HCT116 (cell line): ENCODE measurements at regions of chr10 and their contacts with region 1.

Region 1: DNA sequence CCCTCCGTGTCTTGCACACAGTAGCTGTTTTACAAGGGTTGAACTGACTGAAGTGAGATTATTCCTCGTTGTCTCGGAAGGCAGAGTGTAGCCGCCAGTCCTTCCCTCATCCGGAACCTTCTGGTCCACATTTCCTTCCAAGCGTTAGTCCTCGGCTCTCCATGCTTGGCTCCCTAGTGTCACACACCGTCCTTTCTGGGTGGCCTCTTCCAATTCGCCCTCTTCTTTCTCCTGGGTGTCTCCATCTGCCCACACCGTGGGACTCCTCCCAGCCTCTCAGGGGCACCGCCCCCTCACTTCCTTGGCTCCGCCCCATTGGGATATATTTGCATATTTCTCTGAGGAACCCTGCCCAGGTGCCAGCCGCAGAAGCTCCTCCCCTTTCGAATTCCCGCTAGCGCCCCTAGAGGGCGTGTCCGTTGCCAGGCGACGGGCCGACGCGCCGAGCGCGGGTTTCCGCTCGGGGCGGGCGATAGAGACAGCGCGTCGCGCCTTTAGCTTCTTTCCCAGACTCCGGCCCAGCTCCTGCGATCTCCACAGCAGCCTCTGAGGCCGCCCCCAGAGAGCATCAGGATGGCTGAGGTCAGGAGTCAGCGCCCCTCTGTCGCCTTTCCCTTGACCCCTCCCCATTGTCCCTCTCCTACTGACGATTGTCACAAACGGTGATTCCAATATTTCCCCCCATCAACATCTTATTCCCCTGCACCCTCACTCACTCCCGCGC is at the start of gene CFAP58:
- DNase-seq: peak; percentile 89
- ATAC-seq: peak; percentile 97
- H3K4me3 ChIP-seq: peak within 1 kb of the TSS; percentile 20 to 38
- H3K27ac ChIP-seq: no peak within 1 kb of the TSS
- H3K4me1 ChIP-seq: peaks cover 7 to 33% of the 10 kb centered on the region in 2 experiments; a peak in 3 of 4 replicates
- H3K27me3 ChIP-seq: no peaks in the 10 kb centered on the region; the same call in 1 of the 2 replicates
- CTCF ChIP-seq: peak; percentile 41 to 83 (median 75); a peak in 4 of 6 replicates
- POLR2A ChIP-seq: no peak
- RAD21 ChIP-seq: peak; percentile 9; the same call in 1 of the 2 replicates
- total RNA-seq, gene CFAP58: 0.91 TPM

Region 2: DNA sequence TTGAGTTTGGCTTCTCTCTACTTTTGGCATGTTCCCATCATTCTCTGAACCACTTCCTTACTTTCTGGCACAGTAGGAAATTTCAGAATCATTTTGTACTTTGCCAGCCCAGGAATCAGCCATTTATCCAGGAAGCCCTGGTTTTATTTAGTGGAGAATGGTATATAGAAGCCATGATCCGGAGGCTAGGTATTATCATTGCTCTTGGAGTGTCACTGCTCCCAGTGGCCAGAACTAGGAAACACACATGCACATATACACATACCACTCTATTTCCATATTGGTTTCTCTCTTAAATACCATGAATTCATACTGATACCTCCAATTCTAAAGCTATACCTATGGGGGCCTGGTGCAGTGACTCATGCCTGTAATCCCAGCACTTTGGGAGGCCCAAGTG is 1813.5 kb before region 1 on chr10:
- CTCF ChIA-PET with region 1: no interaction called
- POLR2A ChIA-PET with region 1: no interaction called
- RAD21 ChIA-PET with region 1: no interaction called
- intact Hi-C with region 1: no loop called
- DNase-seq: peak; percentile 31
- ATAC-seq: peak; percentile 100
- H3K4me3 ChIP-seq: no peak overlapping the region
- H3K27ac ChIP-seq: no peak overlapping the region
- H3K4me1 ChIP-seq: 0 out of 4 replicates have a peak, but pooled peaks cover 0 to 5% of the 10 kb centered on the region in 2 experiments
- H3K27me3 ChIP-seq: no peaks in the 10 kb centered on the region
- CTCF ChIP-seq: peak; percentile 21 to 80 (median 75); a peak in 5 of 6 replicates
- POLR2A ChIP-seq: no peak
- RAD21 ChIP-seq: peak; percentile 22; the same call in 1 of the 2 replicates

Region 3: DNA sequence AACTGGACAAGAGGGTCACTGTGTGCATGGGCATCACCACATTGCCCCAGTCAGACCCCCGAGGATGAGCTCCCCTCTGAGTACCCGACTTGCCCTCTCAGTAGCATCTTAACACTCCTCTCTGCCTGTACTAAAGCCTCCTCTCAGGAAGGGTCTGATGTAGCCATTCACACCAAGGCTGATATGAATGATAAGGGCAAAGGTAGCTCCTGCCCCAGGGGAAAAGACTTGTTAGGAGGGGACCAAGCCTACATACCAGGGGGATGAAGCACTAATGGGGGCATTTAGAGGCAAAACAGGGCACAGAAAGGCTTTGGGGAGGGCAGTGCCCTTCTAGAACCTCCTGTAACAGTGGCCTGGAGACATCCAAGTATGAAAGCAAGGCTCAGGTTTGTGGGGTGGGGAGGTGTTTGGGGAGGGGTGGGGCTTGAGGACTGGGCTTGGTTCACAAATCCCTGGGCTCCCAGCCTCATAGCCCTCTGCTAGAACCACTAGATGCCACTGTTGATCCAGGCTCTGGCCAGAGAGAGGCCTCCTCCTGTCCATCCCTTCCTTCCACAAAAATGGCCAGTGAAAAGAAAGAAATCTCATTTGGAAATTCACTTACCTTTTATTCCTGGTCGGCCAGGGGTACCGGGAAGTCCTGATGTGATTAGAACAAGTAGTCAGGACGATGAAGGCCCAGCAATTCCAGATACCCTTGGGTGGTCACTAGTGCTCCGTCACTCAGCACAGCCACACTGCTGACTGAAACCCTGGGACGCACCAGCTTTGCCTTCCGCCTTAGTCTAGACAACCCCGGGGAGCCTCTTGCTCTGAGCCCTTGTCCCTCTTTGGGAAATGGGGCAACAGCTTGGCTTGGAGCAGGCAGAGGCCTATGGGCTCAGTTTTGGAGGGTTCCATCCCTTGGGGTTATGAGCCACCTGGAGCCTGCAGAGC is 308.1 kb before region 1 on chr10:
- CTCF ChIA-PET with region 1: no interaction called
- POLR2A ChIA-PET with region 1: no interaction called
- RAD21 ChIA-PET with region 1: interaction called in 1 of 2 experiments, 3 read pairs
- intact Hi-C with region 1: loop called (anchors 1 kb)
- DNase-seq: peak; percentile 74
- ATAC-seq: peak; percentile 93
- H3K4me3 ChIP-seq: no peak overlapping the region
- H3K27ac ChIP-seq: no peak overlapping the region
- H3K4me1 ChIP-seq: peaks cover 15 to 38% of the 10 kb centered on the region in 2 experiments
- H3K27me3 ChIP-seq: no peaks in the 10 kb centered on the region
- CTCF ChIP-seq: peak in 2 of 3 experiments; percentile 90 to 94; a peak in 4 of 6 replicates
- POLR2A ChIP-seq: no peak
- RAD21 ChIP-seq: no peak

Region 4: DNA sequence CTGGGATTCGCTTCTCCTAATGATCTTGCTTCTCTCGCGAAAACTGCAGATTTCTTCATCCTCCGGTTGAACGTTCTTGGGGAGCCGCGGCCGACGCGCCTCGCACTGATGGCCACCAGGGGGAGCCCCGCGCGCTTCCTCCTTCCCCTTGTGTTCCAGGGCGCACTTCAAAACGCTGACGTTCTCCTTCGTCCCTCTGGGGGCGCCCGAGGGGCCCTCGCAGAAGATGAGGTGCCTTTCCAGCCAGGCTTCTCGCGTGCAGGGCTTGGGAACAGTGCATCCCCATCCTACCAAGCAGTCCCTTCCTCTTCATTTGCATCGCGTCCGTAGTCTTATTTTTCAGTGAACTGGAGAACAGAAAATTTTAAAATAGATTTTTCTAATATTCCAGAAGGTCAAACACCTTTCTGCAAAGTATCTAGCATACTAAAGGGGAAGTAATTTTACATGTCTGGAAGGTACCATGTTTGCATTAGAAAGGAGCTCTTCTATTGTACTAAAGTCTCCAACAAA is 62.0 kb before region 1 on chr10:
- CTCF ChIA-PET with region 1: interaction called, 25 read pairs
- POLR2A ChIA-PET with region 1: no interaction called
- RAD21 ChIA-PET with region 1: interaction called in 1 of 2 experiments, 3 read pairs
- intact Hi-C with region 1: loop called (anchors 1 kb)
- DNase-seq: peak; percentile 73
- ATAC-seq: peak; percentile 97
- H3K4me3 ChIP-seq: no peak overlapping the region
- H3K27ac ChIP-seq: no peak overlapping the region
- H3K4me1 ChIP-seq: peaks cover 3 to 5% of the 10 kb centered on the region in 2 experiments; a peak in 3 of 4 replicates
- H3K27me3 ChIP-seq: no peaks in the 10 kb centered on the region
- CTCF ChIP-seq: peak; percentile 100
- POLR2A ChIP-seq: no peak
- RAD21 ChIP-seq: peak; percentile 94

Region 5: GRCh38 chr10:104297697-104298660 is 55.5 kb before region 1 on chr10:
- CTCF ChIA-PET with region 1: interaction called, 13 read pairs
- POLR2A ChIA-PET with region 1: no interaction called
- RAD21 ChIA-PET with region 1: no interaction called
- intact Hi-C with region 1: no loop called
- DNase-seq: no peak
- ATAC-seq: peak; percentile 88
- H3K4me3 ChIP-seq: no peak overlapping the region
- H3K27ac ChIP-seq: no peak overlapping the region
- H3K4me1 ChIP-seq: no peaks in the 10 kb centered on the region
- H3K27me3 ChIP-seq: no peaks in the 10 kb centered on the region
- CTCF ChIP-seq: peak; percentile 53 to 90 (median 87); a peak in 5 of 6 replicates
- POLR2A ChIP-seq: no peak
- RAD21 ChIP-seq: 0 out of 2 replicates have a peak, but pooled peaks have one; percentile 19

Region 6: DNA sequence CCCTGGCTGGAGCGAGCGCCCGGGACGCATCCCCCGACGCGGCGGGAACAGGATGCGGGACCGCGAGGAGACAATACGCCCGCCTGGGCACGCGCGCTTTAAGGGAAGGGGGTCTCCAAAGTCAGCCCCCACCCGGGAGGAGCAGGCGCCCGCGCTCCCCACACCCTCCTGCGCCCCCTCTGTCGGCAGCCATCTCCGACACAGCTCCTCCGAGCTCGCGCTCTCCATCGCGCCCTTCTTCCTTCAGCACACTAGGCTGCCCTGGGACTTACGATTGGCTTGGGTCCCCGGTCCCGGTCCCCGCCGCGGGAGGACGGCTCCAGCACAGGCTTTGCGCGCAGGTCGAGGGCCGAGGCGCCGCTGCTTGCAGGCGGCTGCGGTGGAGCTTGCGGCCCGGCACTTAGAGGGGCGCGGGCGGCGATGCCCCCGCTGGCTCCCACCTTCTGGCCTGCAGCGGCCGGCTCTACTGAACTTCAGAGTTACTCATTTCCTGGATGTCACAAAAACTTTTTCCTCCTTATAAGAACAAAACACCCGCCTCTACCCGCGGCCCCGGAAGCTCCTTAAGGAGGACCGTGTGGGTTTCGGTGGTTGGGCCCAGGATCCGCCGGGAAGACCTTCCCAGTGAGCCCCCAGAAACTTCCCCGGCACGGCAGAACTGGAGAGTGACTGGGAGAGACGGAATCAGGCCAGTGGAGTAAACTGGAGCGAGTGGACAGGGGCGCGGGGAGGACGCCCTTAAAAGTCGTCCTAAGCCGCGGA is 15.3 kb before region 1 on chr10 and contains the start of gene ITPRIP:
- CTCF ChIA-PET with region 1: interaction called, 8 read pairs
- POLR2A ChIA-PET with region 1: interaction called, 8 read pairs
- RAD21 ChIA-PET with region 1: interaction called in 1 of 2 experiments, 5 read pairs
- intact Hi-C with region 1: loop called (anchors 2 kb)
- DNase-seq: peak; percentile 69
- ATAC-seq: peak; percentile 73
- H3K4me3 ChIP-seq: peak within 1 kb of the TSS; percentile 76 to 95
- H3K27ac ChIP-seq: peak within 1 kb of the TSS; percentile 85
- H3K4me1 ChIP-seq: peaks cover 37 to 57% of the 10 kb centered on the region in 2 experiments
- H3K27me3 ChIP-seq: no peaks in the 10 kb centered on the region
- CTCF ChIP-seq: peak in 2 of 3 experiments; percentile 29 to 34; a peak in 3 of 6 replicates
- POLR2A ChIP-seq: peak; percentile 87
- RAD21 ChIP-seq: no peak
- total RNA-seq, gene ITPRIP: 12.0 TPM